Naive thymus-derived CD4-positive, alpha-beta T cell (primary cell): ENCODE measurements at regions of chr13 and their contacts with region 1.

Region 1: DNA sequence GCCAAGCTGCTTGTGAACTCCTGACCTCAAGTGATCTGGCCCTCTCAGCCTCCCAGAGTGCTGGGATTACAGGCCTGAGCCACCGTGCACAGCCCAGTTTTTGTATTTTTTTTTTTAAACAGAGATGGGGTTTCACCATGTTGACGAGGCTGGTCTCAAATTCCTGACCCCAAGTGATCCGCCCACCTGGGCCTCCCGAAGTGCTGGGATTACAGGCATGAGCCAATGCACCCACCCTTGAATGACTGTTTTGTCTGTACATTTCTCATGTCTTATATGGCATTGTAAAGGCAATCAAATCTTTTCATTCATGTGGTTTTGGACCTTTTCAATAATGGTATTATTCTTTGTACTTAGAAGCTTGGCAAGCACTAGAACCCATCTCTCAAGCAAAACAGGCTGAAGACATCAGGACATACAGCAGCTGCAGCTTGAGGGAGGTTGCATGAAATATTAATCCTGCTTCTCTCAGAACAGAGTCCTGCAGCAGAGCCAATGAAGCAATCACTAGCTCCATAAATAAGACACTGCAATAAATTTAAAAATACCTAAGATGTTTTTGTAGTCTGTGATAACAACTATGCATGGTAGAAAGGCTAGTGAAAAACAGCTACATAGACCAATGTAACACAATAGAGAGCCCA is 209.9 kb downstream of the TUBA3C start:
- DNase-seq: no peak
- ATAC-seq: no peak
- H3K4me3 ChIP-seq: no peak overlapping the region
- H3K4me3 Mint-ChIP-seq: no peak overlapping the region
- H3K27ac ChIP-seq: no peak overlapping the region
- H3K27ac Mint-ChIP-seq: no peak overlapping the region
- H3K4me1 ChIP-seq: no peaks in the 10 kb centered on the region
- H3K4me1 Mint-ChIP-seq: peaks cover 0 to 5% (median 0%) of the 10 kb centered on the region in 7 donors
- H3K27me3 ChIP-seq: no peaks in the 10 kb centered on the region
- H3K27me3 Mint-ChIP-seq: no peaks in the 10 kb centered on the region

Region 2: DNA sequence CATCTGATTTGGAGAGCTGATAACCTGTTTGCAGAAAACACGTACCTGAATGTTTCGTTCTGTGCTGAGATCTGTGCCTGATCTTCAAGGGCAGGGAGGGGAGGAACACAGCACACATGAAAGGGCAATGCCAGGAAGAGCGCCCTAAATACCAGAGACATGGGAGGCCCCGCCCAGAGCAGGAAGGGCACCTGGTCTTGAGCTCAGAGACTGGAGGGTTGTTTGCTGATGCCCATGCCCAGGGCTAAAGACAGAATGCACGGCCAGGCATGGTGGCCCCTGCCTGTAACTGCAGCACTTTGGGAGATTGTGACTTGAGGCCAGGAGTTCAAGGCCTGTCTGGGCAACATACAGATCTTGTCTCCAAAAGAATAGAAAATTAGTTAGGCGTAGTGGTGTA is 26.7 kb after region 1 on chr13:
- CTCF ChIA-PET with region 1: no interaction called
- POLR2A ChIA-PET with region 1: no interaction called
- intact Hi-C with region 1: loop called in 1 of 2 experiments (anchors 2 kb)
- DNase-seq: peak in 4 of 9 donors; percentile 10 to 37 (median 26)
- ATAC-seq: peak; percentile 78
- H3K4me3 ChIP-seq: no peak overlapping the region
- H3K4me3 Mint-ChIP-seq: peak overlapping the region in 9 of 10 donors; percentile 4 to 71 (median 58)
- H3K27ac ChIP-seq: no peak overlapping the region
- H3K27ac Mint-ChIP-seq: peak overlapping the region in 7 of 9 donors; percentile 18 to 89 (median 83)
- H3K4me1 ChIP-seq: peaks cover 0 to 9% of the 10 kb centered on the region in 2 donors
- H3K4me1 Mint-ChIP-seq: peaks cover 0 to 47% (median 21%) of the 10 kb centered on the region in 7 donors
- H3K27me3 ChIP-seq: no peaks in the 10 kb centered on the region
- H3K27me3 Mint-ChIP-seq: no peaks in the 10 kb centered on the region